Prostate gland (tissue), 2 donors: ENCODE measurements at regions of chr7 and their contacts with region 1.

Region 1: DNA sequence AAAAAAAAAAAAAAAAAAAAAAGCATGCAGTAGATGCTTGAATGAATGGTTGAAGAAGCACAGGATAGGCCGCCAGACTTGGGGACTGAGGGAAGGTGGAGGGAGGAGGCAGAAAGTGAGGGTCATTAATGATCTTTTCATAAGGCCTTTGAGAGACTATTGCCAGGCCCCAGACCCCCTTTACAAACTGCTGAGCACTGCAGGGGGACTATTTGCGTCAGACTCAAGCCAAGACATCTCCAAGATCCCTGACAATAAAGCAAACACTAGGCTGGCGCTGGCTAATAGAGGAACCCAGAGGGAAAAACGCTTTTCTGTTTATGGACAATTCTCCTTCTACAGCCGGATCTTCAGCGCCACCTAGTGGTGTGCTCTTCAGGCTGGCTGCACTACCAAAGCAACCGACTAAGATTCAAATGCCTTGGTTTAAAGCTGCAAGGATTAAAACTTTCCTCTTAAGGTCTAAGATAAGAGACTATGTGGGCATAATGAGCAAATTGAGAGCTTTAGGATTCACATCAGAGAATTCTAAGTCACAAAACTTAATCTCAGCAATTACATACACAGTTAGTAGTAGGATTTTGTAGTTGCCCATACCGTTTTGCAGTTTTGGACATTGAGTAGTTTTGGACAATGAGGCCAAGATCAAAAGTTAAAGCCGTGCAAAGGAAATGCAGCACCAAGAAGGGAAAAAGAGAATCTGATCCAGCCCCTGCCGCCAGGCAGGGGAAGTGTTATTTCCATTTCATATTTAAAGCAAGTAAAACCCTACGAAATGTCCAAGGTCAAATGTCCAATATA is 17.9 kb upstream of the AGK start:
- DNase-seq: peak; percentile 65
- H3K4me3 ChIP-seq: no peak overlapping the region
- H3K27ac ChIP-seq: no peak overlapping the region
- H3K4me1 ChIP-seq: no peaks in the 10 kb centered on the region
- H3K27me3 ChIP-seq: no peaks in the 10 kb centered on the region
- CTCF ChIP-seq: peak; percentile 82 to 95 (median 86)
- POLR2A ChIP-seq: no peak

Region 2: DNA sequence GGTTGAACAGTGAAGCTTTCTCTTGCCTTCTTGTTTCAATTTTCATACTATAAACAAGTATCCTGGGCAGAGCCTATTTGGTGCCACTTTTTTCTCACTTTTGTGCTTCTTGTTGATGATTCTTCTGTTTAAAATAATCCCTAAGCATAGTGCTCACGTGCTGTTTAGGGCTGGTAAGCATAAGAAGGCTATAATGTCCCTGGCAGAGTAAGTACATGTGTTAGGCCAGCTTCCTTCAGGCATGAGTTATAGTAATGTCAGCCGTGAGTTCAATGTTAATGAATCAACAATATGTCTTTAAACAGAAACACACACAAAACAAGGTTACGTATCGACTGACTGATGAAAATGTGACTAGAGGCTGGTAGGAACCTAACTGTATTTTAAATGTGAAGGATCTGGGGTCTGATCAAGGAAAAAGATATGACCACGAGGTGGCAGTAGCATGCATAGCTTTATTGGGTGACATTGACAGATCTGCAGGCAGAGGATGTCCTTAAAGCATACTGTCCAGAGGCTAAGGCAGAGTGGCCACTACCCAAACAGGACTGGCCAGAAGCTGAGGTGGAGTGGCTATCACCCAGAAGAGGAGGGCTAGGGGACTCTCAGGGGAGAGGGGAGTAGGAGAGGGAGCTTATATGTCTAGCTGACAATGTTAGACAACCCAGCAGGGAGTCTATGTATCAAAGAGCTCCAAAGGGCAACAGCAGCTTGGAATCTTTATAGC is 722.4 kb before region 1 on chr7:
- intact Hi-C with region 1: loop called (anchors 10 kb)
- DNase-seq: peak; percentile 74
- H3K4me3 ChIP-seq: no peak overlapping the region
- H3K27ac ChIP-seq: no peak overlapping the region
- H3K4me1 ChIP-seq: no peaks in the 10 kb centered on the region
- H3K27me3 ChIP-seq: no peaks in the 10 kb centered on the region
- CTCF ChIP-seq: peak; percentile 42 to 81 (median 76)
- POLR2A ChIP-seq: no peak

Region 3: GRCh38 chr7:141072548-141073172 is 460.7 kb before region 1 on chr7:
- intact Hi-C with region 1: loop called (anchors 10 kb)
- DNase-seq: peak; percentile 79
- H3K4me3 ChIP-seq: peak overlapping the region; percentile 41 to 58
- H3K27ac ChIP-seq: peak overlapping the region; percentile 56 to 68
- H3K4me1 ChIP-seq: no peaks in the 10 kb centered on the region
- H3K27me3 ChIP-seq: no peaks in the 10 kb centered on the region
- CTCF ChIP-seq: no peak
- POLR2A ChIP-seq: peak; percentile 24